Mammary epithelial cell (primary cell): ENCODE measurements at regions of chr7 and their contacts with region 1.

Region 1: DNA sequence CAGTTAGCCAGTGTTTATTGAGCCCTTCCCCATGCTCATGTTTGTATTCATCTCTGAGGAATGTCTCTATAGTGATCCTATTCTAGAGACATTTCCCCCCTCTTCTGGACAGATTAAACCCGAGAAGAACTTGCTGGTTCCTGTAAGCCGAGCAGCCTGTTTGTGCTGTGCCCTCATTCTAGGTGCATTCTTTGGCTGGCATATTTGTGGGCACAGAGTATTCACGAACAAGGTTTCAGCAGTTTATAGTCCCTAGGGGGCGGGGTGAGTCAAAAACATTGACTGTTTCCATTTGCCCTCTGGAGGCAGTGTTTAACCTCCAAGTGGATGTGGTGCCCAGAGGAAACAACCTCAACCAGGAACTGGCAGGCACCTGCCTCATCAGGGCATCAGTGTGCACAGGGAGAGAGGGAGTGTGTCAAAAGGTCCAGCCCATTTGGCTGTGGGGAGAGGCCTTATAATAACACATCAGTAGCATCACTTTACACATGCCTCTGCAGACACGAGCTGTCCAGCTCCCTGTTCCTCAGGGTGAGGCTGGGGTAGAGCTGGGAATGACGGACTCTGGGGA is 273.3 kb upstream of the LRGUK start:
- DNase-seq: peak; percentile 98
- H3K4me3 ChIP-seq: no peak overlapping the region
- H3K27ac ChIP-seq: peak overlapping the region; percentile 96
- H3K4me1 ChIP-seq: peaks cover 45% of the 10 kb centered on the region
- H3K27me3 ChIP-seq: no peaks in the 10 kb centered on the region
- CTCF ChIP-seq: peak; percentile 66 to 70

Region 2: GRCh38 chr7:133252858-133253518 is 600.8 kb before region 1 on chr7 and contains the start of gene EXOC4:
- CTCF ChIA-PET with region 1: no interaction called
- dilution Hi-C with region 1: no loop called
- in situ Hi-C with region 1: no loop called
- intact Hi-C with region 1: loop called (anchors 10 kb)
- DNase-seq: peak; percentile 96
- H3K4me3 ChIP-seq: peak within 1 kb of the TSS; percentile 88 to 97 (median 91)
- H3K27ac ChIP-seq: peak within 1 kb of the TSS; percentile 69
- H3K4me1 ChIP-seq: peaks cover 4% of the 10 kb centered on the region
- H3K27me3 ChIP-seq: no peaks in the 10 kb centered on the region
- CTCF ChIP-seq: no peak
- total RNA-seq, gene EXOC4: 90.4 to 91.7 TPM

Region 3: GRCh38 chr7:133564484-133564883 is 289.3 kb before region 1 on chr7:
- CTCF ChIA-PET with region 1: no interaction called
- dilution Hi-C with region 1: no loop called
- in situ Hi-C with region 1: no loop called
- intact Hi-C with region 1: loop called (anchors 5 kb)
- DNase-seq: no peak
- H3K4me3 ChIP-seq: no peak overlapping the region
- H3K27ac ChIP-seq: no peak overlapping the region
- H3K4me1 ChIP-seq: peaks cover 3% of the 10 kb centered on the region
- H3K27me3 ChIP-seq: no peaks in the 10 kb centered on the region
- CTCF ChIP-seq: peak; percentile 10 to 35

Region 4: DNA sequence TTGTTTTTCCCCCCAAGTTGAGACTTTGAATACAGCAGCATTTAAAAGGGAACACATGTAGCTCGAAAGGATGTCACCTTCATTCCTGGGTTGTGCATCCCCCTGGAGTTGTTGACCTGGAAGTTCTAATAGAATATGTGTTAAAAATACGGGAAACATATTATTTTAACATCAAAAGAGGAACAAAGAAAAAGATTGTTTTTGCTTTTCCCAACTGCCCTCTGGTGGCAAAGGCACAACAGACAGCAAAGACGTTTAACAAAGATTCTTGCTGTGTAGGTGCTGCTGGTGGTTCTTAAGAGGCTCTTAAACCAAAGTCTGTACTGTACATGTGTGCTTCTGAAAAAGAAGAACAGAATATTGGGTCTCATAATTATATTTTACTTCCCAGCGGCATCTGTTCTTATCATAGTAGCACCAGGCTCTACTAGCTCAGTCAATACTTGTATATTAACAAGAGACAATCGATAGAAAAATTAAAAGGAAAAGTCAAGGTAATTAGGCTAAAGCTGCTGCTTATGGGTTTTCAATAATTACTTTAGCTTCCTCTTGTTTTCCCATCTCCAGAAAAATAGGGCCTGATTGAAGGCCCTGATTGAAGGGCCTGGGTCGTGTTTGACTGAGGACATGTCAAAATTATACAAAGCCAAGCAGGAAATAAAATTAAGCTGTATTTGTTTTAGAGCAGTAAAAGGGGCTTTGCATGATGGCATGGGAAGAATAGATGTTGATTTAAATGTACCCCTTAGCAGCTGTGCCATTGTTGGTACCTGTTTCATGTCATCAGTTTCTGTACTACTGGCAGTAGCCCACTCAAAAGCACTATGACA is 110.9 kb before region 1 on chr7:
- CTCF ChIA-PET with region 1: no interaction called
- dilution Hi-C with region 1: no loop called
- in situ Hi-C with region 1: no loop called
- intact Hi-C with region 1: loop called (anchors 1 kb)
- DNase-seq: peak; percentile 16
- H3K4me3 ChIP-seq: no peak overlapping the region
- H3K27ac ChIP-seq: no peak overlapping the region
- H3K4me1 ChIP-seq: peaks cover 14% of the 10 kb centered on the region
- H3K27me3 ChIP-seq: no peaks in the 10 kb centered on the region
- CTCF ChIP-seq: peak; percentile 53 to 63

Region 5: DNA sequence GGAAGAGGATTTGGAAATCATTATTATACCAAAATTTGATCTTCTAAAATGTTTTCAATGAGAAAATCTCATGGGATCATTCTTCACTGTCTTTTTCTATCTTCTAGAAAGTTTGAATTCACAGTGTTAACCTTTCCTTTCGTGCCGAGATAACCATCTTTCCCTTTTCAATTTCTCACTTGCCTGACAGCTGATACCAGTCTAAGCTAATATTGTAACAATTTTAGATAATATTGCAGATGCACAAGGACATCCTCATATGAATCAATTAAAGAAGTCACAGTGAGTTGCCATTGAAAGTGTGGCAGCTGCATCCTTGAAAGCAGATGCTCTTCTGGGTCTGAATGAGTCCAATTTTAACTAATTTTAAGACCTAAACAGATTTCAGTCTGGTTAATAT is 133.8 kb after region 1 on chr7:
- CTCF ChIA-PET with region 1: no interaction called
- dilution Hi-C with region 1: no loop called
- in situ Hi-C with region 1: no loop called
- intact Hi-C with region 1: loop called (anchors 1 kb)
- DNase-seq: no peak
- H3K4me3 ChIP-seq: no peak overlapping the region
- H3K27ac ChIP-seq: no peak overlapping the region
- H3K4me1 ChIP-seq: peaks cover 16% of the 10 kb centered on the region
- H3K27me3 ChIP-seq: no peaks in the 10 kb centered on the region
- CTCF ChIP-seq: no peak